ENCODE measurements at regions of chr2 and their contacts with region 1.

Region 1: GRCh38 chr2:98412751-98413458 is 31.8 kb upstream of the INPP4A start:
- DNase-seq: peak; percentile 83
- ATAC-seq: peak; percentile 81
- H3K4me3 ChIP-seq: no peak overlapping the region
- H3K4me3 Mint-ChIP-seq: no peak overlapping the region
- H3K27ac ChIP-seq: no peak overlapping the region
- H3K27ac Mint-ChIP-seq: no peak overlapping the region
- H3K4me1 ChIP-seq: peaks cover 0 to 2% of the 10 kb centered on the region in 2 donors
- H3K4me1 Mint-ChIP-seq: peaks cover 2% of the 10 kb centered on the region
- H3K27me3 ChIP-seq: no peaks in the 10 kb centered on the region
- H3K27me3 Mint-ChIP-seq: peaks cover 4% of the 10 kb centered on the region
- CTCF ChIP-seq: peak; percentile 93

Region 2: DNA sequence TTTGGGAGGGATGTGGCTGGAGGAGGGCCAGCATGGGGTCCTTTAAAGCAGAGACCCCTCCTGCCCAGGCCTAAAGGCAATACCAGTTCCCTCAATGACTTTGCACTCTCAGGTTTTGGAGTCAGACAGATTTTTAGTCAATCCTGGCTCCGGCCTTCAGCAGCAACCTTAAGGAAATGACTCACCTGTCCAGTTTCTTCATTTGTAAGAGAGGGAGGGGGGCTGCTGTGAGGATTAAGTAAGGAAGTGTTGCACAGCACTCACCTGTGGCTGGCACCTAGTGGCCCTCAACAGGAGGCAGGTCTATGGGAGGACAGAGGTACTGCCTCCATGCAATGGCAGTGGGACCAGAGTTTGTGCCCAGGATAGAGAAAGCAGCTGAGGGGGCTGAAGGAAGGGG is 52.9 kb before region 1 on chr2:
- CTCF ChIA-PET with region 1: no interaction called
- POLR2A ChIA-PET with region 1: no interaction called
- intact Hi-C with region 1: no loop called
- DNase-seq: no peak
- ATAC-seq: no peak
- H3K4me3 ChIP-seq: no peak overlapping the region
- H3K4me3 Mint-ChIP-seq: no peak overlapping the region
- H3K27ac ChIP-seq: no peak overlapping the region
- H3K27ac Mint-ChIP-seq: no peak overlapping the region
- H3K4me1 ChIP-seq: no peaks in the 10 kb centered on the region
- H3K4me1 Mint-ChIP-seq: no peaks in the 10 kb centered on the region
- H3K27me3 ChIP-seq: peaks cover 0 to 11% (median 5%) of the 10 kb centered on the region in 4 experiments
- H3K27me3 Mint-ChIP-seq: peaks cover 6% of the 10 kb centered on the region
- CTCF ChIP-seq: no peak

Region 3: DNA sequence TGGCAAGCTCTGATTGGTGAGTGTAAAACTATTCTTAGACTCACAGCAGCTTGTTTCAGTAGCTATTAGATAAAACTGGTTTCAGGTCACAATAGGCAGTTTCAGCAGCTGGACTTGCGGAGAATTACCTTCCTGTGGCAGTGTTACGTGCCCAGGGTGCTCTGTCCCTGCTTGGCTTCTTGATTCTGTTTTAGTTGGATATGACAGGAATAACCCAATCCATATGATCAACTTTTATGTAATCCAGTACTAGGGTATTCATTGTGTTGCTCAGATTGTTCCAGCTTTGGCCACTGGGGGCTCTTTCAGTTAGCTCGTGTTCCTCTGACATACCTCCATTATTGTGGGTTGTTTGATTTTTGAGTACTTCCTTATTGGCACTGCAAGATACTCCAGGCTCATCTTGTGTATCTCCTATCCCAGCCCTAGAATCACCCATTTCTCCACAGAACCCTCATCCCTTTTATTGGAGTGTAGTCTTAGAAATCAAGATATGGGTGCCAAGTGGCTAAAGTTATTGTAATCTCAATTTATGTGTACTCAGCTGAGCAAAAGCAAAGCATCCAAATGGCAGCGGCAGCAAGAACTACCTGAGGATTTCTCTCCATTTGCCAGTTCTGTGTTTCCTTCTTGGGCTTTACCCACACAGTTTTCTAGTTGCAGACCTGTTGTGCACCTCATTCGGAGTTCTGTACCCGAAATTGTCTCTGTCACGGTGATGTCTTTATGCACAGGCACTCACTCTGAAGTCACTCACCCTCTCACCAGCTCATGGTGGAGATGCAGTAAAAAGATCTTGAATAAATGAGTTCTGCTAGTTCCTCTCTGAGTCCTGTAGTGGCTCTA is 75.1 kb after region 1 on chr2:
- CTCF ChIA-PET with region 1: interaction called, 3 read pairs
- POLR2A ChIA-PET with region 1: no interaction called
- intact Hi-C with region 1: loop called (anchors 1 kb)
- DNase-seq: peak; percentile 59
- ATAC-seq: peak; percentile 86
- H3K4me3 ChIP-seq: no peak overlapping the region
- H3K4me3 Mint-ChIP-seq: no peak overlapping the region
- H3K27ac ChIP-seq: no peak overlapping the region
- H3K27ac Mint-ChIP-seq: no peak overlapping the region
- H3K4me1 ChIP-seq: peaks cover 2 to 21% of the 10 kb centered on the region in 2 donors
- H3K4me1 Mint-ChIP-seq: peaks cover 40% of the 10 kb centered on the region
- H3K27me3 ChIP-seq: no peaks in the 10 kb centered on the region
- H3K27me3 Mint-ChIP-seq: no peaks in the 10 kb centered on the region
- CTCF ChIP-seq: peak; percentile 78

Region 4: GRCh38 chr2:98568881-98569793 is 156.2 kb after region 1 on chr2:
- CTCF ChIA-PET with region 1: interaction called, 4 read pairs
- POLR2A ChIA-PET with region 1: no interaction called
- intact Hi-C with region 1: loop called (anchors 1 kb)
- DNase-seq: peak; percentile 63
- ATAC-seq: peak; percentile 76
- H3K4me3 ChIP-seq: no peak overlapping the region
- H3K4me3 Mint-ChIP-seq: no peak overlapping the region
- H3K27ac ChIP-seq: no peak overlapping the region
- H3K27ac Mint-ChIP-seq: no peak overlapping the region
- H3K4me1 ChIP-seq: no peaks in the 10 kb centered on the region
- H3K4me1 Mint-ChIP-seq: no peaks in the 10 kb centered on the region
- H3K27me3 ChIP-seq: no peaks in the 10 kb centered on the region
- H3K27me3 Mint-ChIP-seq: no peaks in the 10 kb centered on the region
- CTCF ChIP-seq: peak; percentile 93

Region 5: DNA sequence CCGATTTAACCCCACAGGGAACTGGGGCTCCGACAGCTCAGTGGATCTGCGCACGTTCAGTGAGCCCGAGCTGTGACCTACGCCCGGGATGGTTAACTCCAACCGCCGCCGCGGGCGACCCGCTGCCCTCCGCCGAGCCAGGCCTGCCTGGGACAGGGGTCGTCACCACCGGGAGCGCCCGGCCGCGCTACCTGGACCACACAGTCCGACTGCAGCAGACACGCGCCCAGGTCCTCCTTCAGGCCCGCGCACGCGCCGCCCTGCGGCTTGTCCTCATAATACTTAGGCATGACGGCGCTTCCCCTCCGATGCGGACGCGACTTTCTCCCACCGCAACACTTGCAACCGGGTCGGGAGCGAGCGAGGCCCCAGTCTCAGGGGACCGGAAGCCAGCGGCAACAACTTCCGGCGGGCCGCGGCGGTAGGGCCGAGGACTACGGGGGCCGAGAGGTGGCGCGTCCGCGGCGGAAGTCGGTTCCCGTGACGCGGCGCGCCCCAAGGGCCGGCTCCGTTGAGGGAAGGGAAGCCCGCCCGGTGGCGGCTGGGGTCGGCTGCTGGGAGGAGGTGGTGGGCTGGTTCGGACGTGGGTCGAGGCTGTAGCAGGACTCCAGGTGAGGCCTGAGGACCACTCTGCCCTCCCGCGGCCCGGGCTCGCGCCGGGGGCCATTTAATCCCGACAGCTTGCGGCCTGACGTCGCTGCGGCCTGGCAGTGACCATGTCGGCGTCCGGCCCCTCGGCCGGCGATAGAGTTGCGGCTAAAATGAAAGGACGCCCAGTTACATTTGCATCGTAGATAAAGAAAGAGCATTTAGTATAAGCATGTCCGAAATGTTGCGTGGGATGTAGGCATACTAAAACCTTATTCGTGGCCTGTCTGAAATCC is 195.5 kb after region 1 on chr2 and contains the starts of genes COA5 and UNC50:
- CTCF ChIA-PET with region 1: interaction called, 9 read pairs
- POLR2A ChIA-PET with region 1: no interaction called
- intact Hi-C with region 1: loop called (anchors 2 kb)
- DNase-seq: peak; percentile 94
- ATAC-seq: peak; percentile 92
- H3K4me3 ChIP-seq: peak within 1 kb of the TSS; percentile 88 to 99 (median 97)
- H3K4me3 Mint-ChIP-seq: peak within 1 kb of the TSS; percentile 93
- H3K27ac ChIP-seq: peak within 1 kb of the TSS; percentile 86 to 97
- H3K27ac Mint-ChIP-seq: peak within 1 kb of the TSS; percentile 94
- H3K4me1 ChIP-seq: peaks cover 33 to 35% of the 10 kb centered on the region in 2 donors
- H3K4me1 Mint-ChIP-seq: peaks cover 67% of the 10 kb centered on the region
- H3K27me3 ChIP-seq: no peaks in the 10 kb centered on the region
- H3K27me3 Mint-ChIP-seq: no peaks in the 10 kb centered on the region
- CTCF ChIP-seq: no peak
- total RNA-seq, gene COA5: 46.9 and 48.9 TPM in 2 replicates
- total RNA-seq, gene UNC50: 38.8 and 45.5 TPM in 2 replicates

Measured in B cell (primary cell).